SK-N-SH (cell line): ENCODE measurements at regions of chr10 and their contacts with region 1.

Region 1: DNA sequence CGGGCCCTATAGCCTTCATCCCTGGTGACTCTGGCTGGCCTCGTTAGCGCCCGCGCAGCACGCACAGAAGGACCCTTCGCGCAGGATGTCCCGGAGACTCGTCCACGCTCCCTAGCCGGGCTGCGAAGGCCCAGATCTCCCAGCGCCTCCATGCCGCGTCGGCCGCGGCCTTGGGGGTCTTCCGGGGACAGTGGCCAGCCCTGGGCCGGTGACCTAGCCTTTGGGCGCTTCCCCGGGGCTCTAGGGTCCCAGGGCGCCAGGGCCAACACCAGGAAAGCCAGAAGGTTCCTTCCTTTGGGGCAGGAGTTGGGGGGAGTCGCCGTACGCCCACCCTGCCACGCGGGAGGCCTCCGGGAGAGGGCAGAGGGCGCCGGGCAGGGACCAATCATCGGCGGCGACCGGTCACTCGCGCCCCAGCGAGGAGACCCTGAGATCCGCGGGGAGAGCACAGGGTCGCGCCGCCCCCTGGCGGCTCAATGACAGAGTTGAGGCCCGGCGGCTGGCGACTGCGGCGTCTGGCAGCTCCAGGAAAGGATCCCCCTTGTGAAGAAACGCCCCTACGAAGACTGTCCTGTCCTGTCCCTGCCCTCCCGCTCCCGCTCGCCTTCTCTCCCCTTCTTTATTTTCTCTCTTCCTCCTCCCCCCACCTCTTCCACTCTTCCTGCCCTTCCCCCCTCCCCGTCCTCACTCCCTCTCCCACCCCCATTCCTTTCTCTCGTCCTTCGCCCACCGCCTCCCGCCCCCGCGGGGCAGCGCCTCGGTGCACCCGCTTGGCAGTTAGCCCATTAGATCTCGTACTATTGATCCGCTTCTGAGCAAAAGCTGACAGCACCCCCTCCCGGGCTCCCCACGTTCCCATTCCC is 62.3 kb upstream of the LBX1 start:
- DNase-seq: peak; percentile 94
- H3K4me3 ChIP-seq: peak overlapping the region; percentile 57 to 75
- H3K27ac ChIP-seq: peak overlapping the region in 1 of 2 experiments; percentile 92; a peak in 2 of 4 replicates
- H3K4me1 ChIP-seq: peaks cover 0 to 15% of the 10 kb centered on the region in 2 experiments; a peak in 1 of 4 replicates
- H3K27me3 ChIP-seq: peaks cover 16% of the 10 kb centered on the region; the same call in 1 of the 2 replicates
- CTCF ChIP-seq: peak; percentile 62
- EP300 ChIP-seq: no peak
- RAD21 ChIP-seq: peak; percentile 66

Region 2: DNA sequence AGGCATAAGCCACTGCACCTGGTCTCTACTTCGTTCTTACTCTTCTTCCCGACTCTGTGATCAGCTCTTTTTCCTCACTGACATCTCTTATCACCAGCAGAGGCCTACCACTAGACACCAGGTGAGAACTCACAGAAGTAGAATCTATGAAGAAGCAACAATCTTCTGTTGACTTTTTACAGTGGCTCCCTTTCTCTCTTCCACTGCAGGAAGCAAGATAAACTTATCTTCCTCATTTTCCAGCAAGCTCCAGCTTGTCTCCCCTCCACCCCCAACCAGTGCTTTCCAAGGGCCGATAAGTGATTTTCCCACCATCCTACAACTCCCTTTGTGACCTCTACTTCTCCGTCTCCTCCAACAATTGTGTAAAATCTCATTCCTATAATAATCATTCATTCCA is 115.0 kb before region 1 on chr10:
- CTCF ChIA-PET with region 1: no interaction called
- POLR2A ChIA-PET with region 1: no interaction called
- DNase-seq: no peak
- H3K4me3 ChIP-seq: no peak overlapping the region
- H3K27ac ChIP-seq: no peak overlapping the region
- H3K4me1 ChIP-seq: no peaks in the 10 kb centered on the region
- H3K27me3 ChIP-seq: peaks cover 7% of the 10 kb centered on the region; the same call in 1 of the 2 replicates
- CTCF ChIP-seq: no peak
- EP300 ChIP-seq: no peak
- RAD21 ChIP-seq: no peak

Region 3: GRCh38 chr10:101258179-101258885 is 33.2 kb before region 1 on chr10:
- CTCF ChIA-PET with region 1: interaction called, 13 read pairs
- POLR2A ChIA-PET with region 1: no interaction called
- DNase-seq: no peak
- H3K4me3 ChIP-seq: no peak overlapping the region; a peak in 1 of 4 replicates
- H3K27ac ChIP-seq: no peak overlapping the region
- H3K4me1 ChIP-seq: no peaks in the 10 kb centered on the region
- H3K27me3 ChIP-seq: peaks cover 5% of the 10 kb centered on the region; the same call in 1 of the 2 replicates
- CTCF ChIP-seq: no peak
- EP300 ChIP-seq: no peak
- RAD21 ChIP-seq: no peak

Region 4: DNA sequence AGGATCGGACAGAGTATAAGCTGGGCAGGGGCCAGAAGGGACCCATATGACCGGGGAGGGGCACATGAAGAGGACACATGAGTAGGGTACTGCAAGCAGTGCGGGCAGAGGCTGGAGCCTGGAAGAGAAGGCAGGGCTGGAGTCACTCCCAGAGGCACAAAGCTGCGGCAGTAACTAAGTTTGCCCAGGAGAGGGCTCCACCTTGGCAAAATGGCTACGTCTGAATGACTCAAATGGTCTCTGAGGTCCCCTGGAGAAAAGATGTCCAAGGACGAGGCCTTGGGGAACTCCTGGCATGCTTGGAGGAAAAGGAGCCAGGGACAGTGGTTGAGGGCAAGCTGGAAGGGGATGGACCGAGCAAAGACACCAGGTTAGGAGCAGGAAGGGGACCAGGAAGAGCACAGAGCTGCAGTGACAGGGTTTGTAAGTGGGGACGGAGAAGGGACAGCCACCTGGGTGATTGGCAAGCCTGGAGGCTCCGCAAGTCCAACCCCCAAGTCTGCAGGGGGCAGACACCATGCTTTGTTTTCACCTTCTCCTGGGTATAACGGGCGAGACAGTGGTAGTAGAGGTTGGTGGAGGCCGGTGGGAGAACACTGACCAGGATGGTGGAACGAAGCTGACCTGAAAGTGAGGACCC is 19.2 kb before region 1 on chr10:
- CTCF ChIA-PET with region 1: interaction called, 149 read pairs
- POLR2A ChIA-PET with region 1: no interaction called
- DNase-seq: peak; percentile 83
- H3K4me3 ChIP-seq: no peak overlapping the region
- H3K27ac ChIP-seq: no peak overlapping the region
- H3K4me1 ChIP-seq: no peaks in the 10 kb centered on the region; a peak in 1 of 4 replicates
- H3K27me3 ChIP-seq: peaks cover 8% of the 10 kb centered on the region; the same call in 1 of the 2 replicates
- CTCF ChIP-seq: peak; percentile 76
- EP300 ChIP-seq: no peak
- RAD21 ChIP-seq: peak; percentile 66

Region 5: DNA sequence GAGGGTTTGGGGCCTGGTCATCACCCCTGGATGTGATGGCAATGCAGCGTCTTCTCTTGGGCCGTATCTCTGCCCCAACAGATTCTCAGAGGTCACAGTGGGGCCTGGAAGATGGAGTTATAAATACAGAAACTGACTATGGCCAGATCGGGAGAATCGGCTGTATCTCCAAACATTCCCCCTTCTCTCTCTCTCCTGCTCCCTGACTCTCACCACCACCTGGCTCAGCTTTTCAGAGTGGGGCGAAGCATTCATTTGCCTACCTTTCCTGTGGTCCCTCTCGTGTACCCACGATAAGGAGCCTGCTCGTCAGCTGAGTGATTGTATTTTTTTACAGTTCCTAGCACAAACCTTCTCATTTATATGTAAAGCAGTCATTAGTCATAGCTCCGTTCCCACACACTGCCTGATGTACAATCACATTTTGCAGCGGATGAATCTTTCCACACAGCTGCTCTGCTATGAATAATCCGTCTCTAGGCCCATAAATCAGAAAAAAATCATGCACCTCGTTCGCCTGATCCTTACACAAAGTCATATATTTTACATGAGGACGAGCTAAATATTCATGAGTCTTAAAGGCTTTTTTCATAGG is 39.2 kb after region 1 on chr10:
- CTCF ChIA-PET with region 1: interaction called, 11 read pairs
- POLR2A ChIA-PET with region 1: interaction called, 4 read pairs
- DNase-seq: no peak
- H3K4me3 ChIP-seq: no peak overlapping the region
- H3K27ac ChIP-seq: no peak overlapping the region
- H3K4me1 ChIP-seq: peaks cover 0 to 12% of the 10 kb centered on the region in 2 experiments; a peak in 1 of 4 replicates
- H3K27me3 ChIP-seq: peaks cover 22% of the 10 kb centered on the region; the same call in 1 of the 2 replicates
- CTCF ChIP-seq: no peak
- EP300 ChIP-seq: no peak
- RAD21 ChIP-seq: no peak

Region 6: DNA sequence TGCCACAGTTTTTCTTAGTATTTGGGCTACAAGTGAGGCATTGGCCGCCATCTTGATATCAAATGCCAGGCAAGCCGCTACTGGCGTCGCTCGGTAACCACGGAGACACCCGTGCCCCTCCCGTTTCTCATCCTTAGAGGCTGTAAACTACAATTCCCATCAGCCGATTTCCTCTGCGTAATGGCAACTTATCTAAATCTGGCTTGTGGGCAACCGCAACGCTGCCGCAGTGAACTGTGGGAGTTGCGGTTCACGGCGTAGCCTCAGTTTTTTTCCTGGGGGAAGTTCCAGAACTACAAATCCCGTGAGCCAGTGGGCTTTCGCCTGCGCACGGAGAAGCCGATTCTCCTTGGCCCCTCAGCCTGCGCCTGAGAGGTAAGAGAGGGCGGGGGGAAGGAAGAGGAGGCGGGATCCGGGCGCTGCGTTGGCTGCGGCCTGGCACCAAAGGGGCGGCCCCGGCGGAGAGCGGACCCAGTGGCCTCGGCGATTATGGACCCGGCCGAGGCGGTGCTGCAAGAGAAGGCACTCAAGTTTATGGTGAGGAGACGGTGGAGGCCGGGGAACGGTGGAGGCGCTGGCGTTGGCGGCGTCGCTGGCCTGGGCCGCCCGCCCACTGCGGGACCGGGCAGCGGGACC is 62.2 kb after region 1 on chr10 and contains the start of gene BTRC:
- CTCF ChIA-PET with region 1: interaction called, 20 read pairs
- POLR2A ChIA-PET with region 1: interaction called, 12 read pairs
- DNase-seq: peak; percentile 93
- H3K4me3 ChIP-seq: peak within 1 kb of the TSS; percentile 66 to 84
- H3K27ac ChIP-seq: peak within 1 kb of the TSS; percentile 83 to 89
- H3K4me1 ChIP-seq: peaks cover 7 to 9% of the 10 kb centered on the region in 2 experiments; a peak in 3 of 4 replicates
- H3K27me3 ChIP-seq: no peaks in the 10 kb centered on the region; the same call in 1 of the 2 replicates
- CTCF ChIP-seq: no peak
- EP300 ChIP-seq: no peak
- RAD21 ChIP-seq: no peak; the same call in 1 of the 2 replicates
- polyA plus RNA-seq, gene BTRC: 6.5 and 8.1 TPM in 2 replicates

Region 7: GRCh38 chr10:101436302-101436701 is 144.7 kb after region 1 on chr10:
- CTCF ChIA-PET with region 1: interaction called, 243 read pairs
- POLR2A ChIA-PET with region 1: interaction called, 4 read pairs
- DNase-seq: no peak
- H3K4me3 ChIP-seq: no peak overlapping the region
- H3K27ac ChIP-seq: no peak overlapping the region
- H3K4me1 ChIP-seq: peaks cover 0 to 5% of the 10 kb centered on the region in 2 experiments; a peak in 2 of 4 replicates
- H3K27me3 ChIP-seq: no peaks in the 10 kb centered on the region
- CTCF ChIP-seq: no peak
- EP300 ChIP-seq: no peak
- RAD21 ChIP-seq: no peak

Region 8: GRCh38 chr10:101453791-101454718 is 162.5 kb after region 1 on chr10:
- CTCF ChIA-PET with region 1: interaction called, 12 read pairs
- POLR2A ChIA-PET with region 1: interaction called, 3 read pairs
- DNase-seq: no peak
- H3K4me3 ChIP-seq: no peak overlapping the region
- H3K27ac ChIP-seq: peak overlapping the region in 1 of 2 experiments; percentile 12; a peak in 1 of 4 replicates
- H3K4me1 ChIP-seq: peaks cover 0 to 34% of the 10 kb centered on the region in 2 experiments; a peak in 2 of 4 replicates
- H3K27me3 ChIP-seq: no peaks in the 10 kb centered on the region
- CTCF ChIP-seq: no peak
- EP300 ChIP-seq: no peak
- RAD21 ChIP-seq: no peak